ENCODE measurements at regions of chr20 and their contacts with region 1.

Region 1: GRCh38 chr20:62595491-62595890 is 46.8 kb upstream of the SLCO4A1 start:
- DNase-seq: peak; percentile 39
- H3K4me3 ChIP-seq: no peak overlapping the region
- H3K27ac ChIP-seq: no peak overlapping the region
- H3K4me1 ChIP-seq: peaks cover 19% of the 10 kb centered on the region
- H3K27me3 ChIP-seq: no peaks in the 10 kb centered on the region
- CTCF ChIP-seq: no peak

Region 2: GRCh38 chr20:62494980-62495748 is 100.3 kb before region 1 on chr20:
- CTCF ChIA-PET with region 1: no interaction called
- dilution Hi-C with region 1: loop called (anchors 5 kb)
- in situ Hi-C with region 1: no loop called
- intact Hi-C with region 1: no loop called
- DNase-seq: no peak
- H3K4me3 ChIP-seq: no peak overlapping the region
- H3K27ac ChIP-seq: no peak overlapping the region
- H3K4me1 ChIP-seq: peaks cover 5% of the 10 kb centered on the region
- H3K27me3 ChIP-seq: no peaks in the 10 kb centered on the region
- CTCF ChIP-seq: no peak

Region 3: GRCh38 chr20:62536871-62537401 is 58.6 kb before region 1 on chr20:
- CTCF ChIA-PET with region 1: no interaction called
- dilution Hi-C with region 1: no loop called
- in situ Hi-C with region 1: no loop called
- intact Hi-C with region 1: no loop called
- DNase-seq: no peak
- H3K4me3 ChIP-seq: no peak overlapping the region
- H3K27ac ChIP-seq: no peak overlapping the region
- H3K4me1 ChIP-seq: no peaks in the 10 kb centered on the region
- H3K27me3 ChIP-seq: peaks cover 17% of the 10 kb centered on the region
- CTCF ChIP-seq: no peak

Region 4: GRCh38 chr20:62647521-62648317 is 52.2 kb after region 1 on chr20:
- CTCF ChIA-PET with region 1: no interaction called
- dilution Hi-C with region 1: no loop called
- in situ Hi-C with region 1: no loop called
- intact Hi-C with region 1: loop called (anchors 2 kb)
- DNase-seq: no peak
- H3K4me3 ChIP-seq: no peak overlapping the region
- H3K27ac ChIP-seq: no peak overlapping the region
- H3K4me1 ChIP-seq: peaks cover 22% of the 10 kb centered on the region
- H3K27me3 ChIP-seq: peaks cover 4% of the 10 kb centered on the region
- CTCF ChIP-seq: no peak

Region 5: GRCh38 chr20:63351811-63352591 is 756.5 kb after region 1 on chr20:
- CTCF ChIA-PET with region 1: no interaction called
- dilution Hi-C with region 1: no loop called
- in situ Hi-C with region 1: no loop called
- intact Hi-C with region 1: no loop called
- DNase-seq: no peak
- H3K4me3 ChIP-seq: no peak overlapping the region
- H3K27ac ChIP-seq: no peak overlapping the region
- H3K4me1 ChIP-seq: no peaks in the 10 kb centered on the region
- H3K27me3 ChIP-seq: peaks cover 3% of the 10 kb centered on the region
- CTCF ChIP-seq: no peak

Measured in mammary epithelial cell (primary cell).